ENCODE measurements at regions of chr11 and their contacts with region 1.

Region 1: GRCh38 chr11:66136752-66137123 is 66.7 kb downstream of the PACS1 start:
- DNase-seq: no peak
- H3K4me3 Mint-ChIP-seq: no peak overlapping the region
- H3K27ac Mint-ChIP-seq: no peak overlapping the region
- H3K4me1 Mint-ChIP-seq: peaks cover 26% of the 10 kb centered on the region
- H3K27me3 Mint-ChIP-seq: no peaks in the 10 kb centered on the region

Region 2: GRCh38 chr11:66045177-66045639 is 91.5 kb before region 1 on chr11:
- CTCF ChIA-PET with region 1: interaction called, 13 read pairs
- POLR2A ChIA-PET with region 1: no interaction called
- DNase-seq: peak; percentile 84
- H3K4me3 Mint-ChIP-seq: peak overlapping the region; percentile 14
- H3K27ac Mint-ChIP-seq: peak overlapping the region; percentile 13
- H3K4me1 Mint-ChIP-seq: peaks cover 16% of the 10 kb centered on the region
- H3K27me3 Mint-ChIP-seq: peaks cover 4% of the 10 kb centered on the region

Region 3: GRCh38 chr11:66051766-66052663 is 84.7 kb before region 1 on chr11 and contains the start of gene SF3B2:
- CTCF ChIA-PET with region 1: interaction called, 13 read pairs
- POLR2A ChIA-PET with region 1: no interaction called
- DNase-seq: peak; percentile 98
- H3K4me3 Mint-ChIP-seq: peak within 1 kb of the TSS; percentile 100
- H3K27ac Mint-ChIP-seq: peak within 1 kb of the TSS; percentile 96
- H3K4me1 Mint-ChIP-seq: peaks cover 37% of the 10 kb centered on the region
- H3K27me3 Mint-ChIP-seq: peaks cover 2% of the 10 kb centered on the region
- total RNA-seq, gene SF3B2: 230 to 241 TPM

Region 4: GRCh38 chr11:66371627-66372415 is 235.1 kb after region 1 on chr11 and contains the start of gene SLC29A2:
- CTCF ChIA-PET with region 1: no interaction called
- POLR2A ChIA-PET with region 1: no interaction called
- DNase-seq: peak; percentile 79
- H3K4me3 Mint-ChIP-seq: peak within 1 kb of the TSS; percentile 80
- H3K27ac Mint-ChIP-seq: peak within 1 kb of the TSS; percentile 91
- H3K4me1 Mint-ChIP-seq: peaks cover 19% of the 10 kb centered on the region
- H3K27me3 Mint-ChIP-seq: peaks cover 7% of the 10 kb centered on the region
- total RNA-seq, gene SLC29A2: 8.4 to 9.0 TPM